Heart left ventricle (tissue), 16 donors: ENCODE measurements at regions of chr20 and their contacts with region 1.

Region 1: DNA sequence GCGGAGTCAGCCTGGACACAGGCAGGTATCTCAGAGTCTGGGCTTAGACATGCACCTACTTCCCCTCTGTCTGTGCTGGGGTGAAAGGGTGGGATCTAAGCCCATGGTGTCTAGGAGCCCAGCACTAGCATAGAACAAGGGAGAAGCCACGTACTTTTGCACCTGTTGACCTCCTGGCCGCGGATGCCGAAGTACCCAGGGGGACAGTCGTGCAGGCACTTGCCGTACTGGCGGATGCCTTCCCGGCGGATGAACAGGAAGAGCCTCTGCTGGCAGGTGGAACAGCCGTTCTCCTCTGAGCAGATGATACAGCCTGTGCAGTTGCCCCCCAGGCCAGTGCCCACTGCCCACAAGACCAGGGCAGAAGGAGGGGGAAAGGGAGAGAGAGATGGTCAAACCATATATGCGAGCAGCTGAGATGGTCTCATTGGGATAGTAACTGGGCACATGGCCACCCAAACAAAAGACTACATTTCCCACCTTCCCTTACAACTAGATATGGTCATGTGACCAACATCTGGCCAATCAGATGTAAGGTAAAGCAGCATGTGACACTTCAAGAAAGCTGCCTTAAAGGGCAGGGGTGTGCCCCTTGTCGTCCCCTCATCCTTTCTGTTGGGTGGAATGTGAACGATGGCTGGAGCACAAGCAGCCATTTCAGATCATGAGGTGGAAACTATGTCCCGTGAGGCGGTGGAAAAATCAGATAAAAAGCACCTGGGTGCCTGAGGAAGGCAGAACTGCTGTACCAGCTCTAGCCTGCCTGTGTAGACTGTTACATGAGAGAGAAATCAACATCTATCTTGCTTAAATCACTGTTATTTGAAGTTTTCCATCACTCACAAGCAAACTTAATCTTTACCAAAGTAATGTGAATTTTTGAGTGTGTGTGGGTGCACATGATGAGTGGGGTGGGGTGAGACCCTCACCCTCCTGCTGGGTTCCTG is 34.0 kb downstream of the RSPO4 start:
- DNase-seq: peak in 1 of 5 donors; percentile 38
- ATAC-seq: no peak
- H3K4me3 ChIP-seq: no peak overlapping the region
- H3K27ac ChIP-seq: no peak overlapping the region
- H3K4me1 ChIP-seq: peaks cover 0 to 4% (median 0%) of the 10 kb centered on the region in 12 donors
- H3K27me3 ChIP-seq: peaks cover 0 to 27% (median 0%) of the 10 kb centered on the region in 9 donors
- CTCF ChIP-seq: no peak
- POLR2A ChIP-seq: no peak

Region 2: DNA sequence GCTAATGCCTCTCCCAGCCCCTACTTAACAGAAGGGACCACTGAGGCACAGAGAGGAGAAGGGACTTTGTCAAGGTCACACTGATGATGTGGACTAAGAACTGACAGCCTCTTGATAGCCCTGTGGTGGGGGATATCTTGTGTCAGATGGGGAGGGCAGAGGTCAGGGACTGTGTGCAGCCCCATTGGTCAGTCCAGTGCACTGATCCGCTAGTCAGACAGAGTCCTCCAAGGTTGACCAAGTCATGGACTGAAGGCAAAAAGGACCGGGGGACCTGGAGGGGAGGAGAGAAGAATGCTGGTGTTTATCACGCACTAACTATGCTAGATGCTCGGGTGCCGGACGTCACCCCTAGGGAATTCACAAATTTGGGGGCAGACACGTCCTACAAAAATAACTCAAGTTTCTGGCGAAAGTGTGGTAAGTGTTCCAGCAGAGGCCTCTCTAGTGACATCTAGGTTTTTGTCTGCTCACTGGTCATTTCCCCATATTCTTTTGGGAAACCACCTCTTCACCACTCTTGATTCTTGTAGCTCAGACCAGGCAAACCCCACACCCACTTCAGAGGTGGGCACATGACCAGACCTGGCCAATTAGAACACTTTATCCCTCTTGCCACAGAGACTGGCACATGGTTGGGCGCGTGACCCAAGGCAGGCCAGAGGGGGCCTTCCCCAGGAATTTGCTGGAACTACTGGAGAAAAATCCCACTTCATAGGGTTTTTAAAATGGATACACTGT is 379.0 kb before region 1 on chr20:
- intact Hi-C with region 1: no loop called
- DNase-seq: no peak
- ATAC-seq: peak in 3 of 4 donors; percentile 9 to 46 (median 38)
- H3K4me3 ChIP-seq: no peak overlapping the region
- H3K27ac ChIP-seq: peak overlapping the region in 11 of 12 donors; percentile 29 to 93 (median 63)
- H3K4me1 ChIP-seq: peaks cover 3 to 37% (median 18%) of the 10 kb centered on the region in 12 donors
- H3K27me3 ChIP-seq: no peaks in the 10 kb centered on the region
- CTCF ChIP-seq: peak in 2 of 12 donors; percentile 7 to 8
- POLR2A ChIP-seq: no peak

Region 3: GRCh38 chr20:1185790-1186334 is 217.8 kb after region 1 on chr20:
- intact Hi-C with region 1: loop called in 1 of 10 experiments (anchors 10 kb)
- DNase-seq: peak in 4 of 5 donors; percentile 38 to 55 (median 43)
- ATAC-seq: peak in 3 of 4 donors; percentile 54 to 72 (median 61)
- H3K4me3 ChIP-seq: peak overlapping the region; percentile 42 to 69 (median 58)
- H3K27ac ChIP-seq: peak overlapping the region in 5 of 12 donors; percentile 46 to 66 (median 47)
- H3K4me1 ChIP-seq: peaks cover 0 to 35% (median 8%) of the 10 kb centered on the region in 12 donors
- H3K27me3 ChIP-seq: peaks cover 0 to 38% (median 9%) of the 10 kb centered on the region in 9 donors
- CTCF ChIP-seq: peak; percentile 32 to 64 (median 46)
- POLR2A ChIP-seq: no peak